Activated CD8-positive, alpha-beta T cell treated with anti-CD3 and anti-CD28 coated beads for 36 hours (primary cell): ENCODE measurements at regions of chr1 and their contacts with region 1.

Region 1: GRCh38 chr1:212699104-212699624 is 476 bp downstream of the BATF3 start:
- DNase-seq: peak; percentile 75
- ATAC-seq: peak; percentile 75
- H3K4me3 Mint-ChIP-seq: peak overlapping the region; percentile 79
- H3K27ac Mint-ChIP-seq: peak overlapping the region; percentile 92
- H3K4me1 Mint-ChIP-seq: peaks cover 57% of the 10 kb centered on the region
- H3K27me3 Mint-ChIP-seq: peaks cover 1% of the 10 kb centered on the region
- CTCF ChIP-seq: peak; percentile 79

Region 2: GRCh38 chr1:212683357-212683722 is 15.8 kb before region 1 on chr1:
- CTCF ChIA-PET with region 1: interaction called, 15 read pairs
- POLR2A ChIA-PET with region 1: interaction called, 10 read pairs
- intact Hi-C with region 1: no loop called
- DNase-seq: peak; percentile 94
- ATAC-seq: peak; percentile 74
- H3K4me3 Mint-ChIP-seq: peak overlapping the region; percentile 67
- H3K27ac Mint-ChIP-seq: peak overlapping the region; percentile 97
- H3K4me1 Mint-ChIP-seq: peaks cover 52% of the 10 kb centered on the region
- H3K27me3 Mint-ChIP-seq: no peaks in the 10 kb centered on the region
- CTCF ChIP-seq: no peak

Region 3: DNA sequence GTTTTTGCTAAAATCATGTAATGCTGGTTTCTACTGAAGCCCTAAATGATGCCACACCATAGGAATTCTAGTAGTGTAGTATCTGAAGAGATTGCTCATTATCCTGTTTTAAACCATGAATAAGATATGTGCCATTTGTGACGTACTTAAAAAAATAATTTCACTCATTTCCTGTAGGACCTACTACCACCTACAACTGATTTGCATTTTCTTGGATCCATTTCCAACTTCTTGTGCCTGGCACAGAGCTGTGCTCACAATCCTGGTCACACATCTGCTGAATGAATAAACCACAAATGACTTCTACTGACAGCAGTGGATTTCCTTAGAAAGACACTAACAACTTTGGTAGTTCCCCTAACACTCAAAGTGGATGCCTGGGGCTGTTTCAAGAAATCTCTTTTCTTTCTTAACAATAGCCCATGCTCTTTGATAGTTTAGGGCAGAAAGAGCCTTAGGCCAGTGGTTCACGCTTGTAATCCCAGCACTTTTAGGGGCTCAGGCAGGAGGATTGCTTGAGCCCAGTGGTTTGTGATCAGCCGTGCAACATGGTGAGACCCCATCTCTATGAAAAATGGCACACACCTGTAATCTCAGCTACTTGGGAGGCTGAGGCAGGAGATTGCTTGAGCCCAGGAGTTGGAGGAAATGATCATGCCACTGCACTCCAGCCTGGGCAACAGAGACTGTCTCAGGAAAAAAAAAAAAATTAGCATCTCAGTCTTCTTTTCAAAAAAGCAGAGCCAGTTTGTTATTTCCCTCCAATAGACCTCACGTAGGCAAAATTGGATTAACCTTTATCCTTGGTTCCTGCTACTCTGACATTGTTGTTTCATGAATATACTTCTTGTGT is 13.5 kb after region 1 on chr1:
- CTCF ChIA-PET with region 1: interaction called, 4 read pairs
- POLR2A ChIA-PET with region 1: interaction called, 11 read pairs
- intact Hi-C with region 1: no loop called
- DNase-seq: peak; percentile 19
- ATAC-seq: peak; percentile 91
- H3K4me3 Mint-ChIP-seq: no peak overlapping the region
- H3K27ac Mint-ChIP-seq: peak overlapping the region; percentile 76
- H3K4me1 Mint-ChIP-seq: peaks cover 21% of the 10 kb centered on the region
- H3K27me3 Mint-ChIP-seq: peaks cover 13% of the 10 kb centered on the region
- CTCF ChIP-seq: no peak

Region 4: GRCh38 chr1:212769459-212770167 is 70.4 kb after region 1 on chr1:
- CTCF ChIA-PET with region 1: interaction called, 15 read pairs
- POLR2A ChIA-PET with region 1: no interaction called
- intact Hi-C with region 1: no loop called
- DNase-seq: no peak
- ATAC-seq: peak; percentile 91
- H3K4me3 Mint-ChIP-seq: peak overlapping the region; percentile 8
- H3K27ac Mint-ChIP-seq: peak overlapping the region; percentile 68
- H3K4me1 Mint-ChIP-seq: peaks cover 68% of the 10 kb centered on the region
- H3K27me3 Mint-ChIP-seq: no peaks in the 10 kb centered on the region
- CTCF ChIP-seq: no peak

Region 5: DNA sequence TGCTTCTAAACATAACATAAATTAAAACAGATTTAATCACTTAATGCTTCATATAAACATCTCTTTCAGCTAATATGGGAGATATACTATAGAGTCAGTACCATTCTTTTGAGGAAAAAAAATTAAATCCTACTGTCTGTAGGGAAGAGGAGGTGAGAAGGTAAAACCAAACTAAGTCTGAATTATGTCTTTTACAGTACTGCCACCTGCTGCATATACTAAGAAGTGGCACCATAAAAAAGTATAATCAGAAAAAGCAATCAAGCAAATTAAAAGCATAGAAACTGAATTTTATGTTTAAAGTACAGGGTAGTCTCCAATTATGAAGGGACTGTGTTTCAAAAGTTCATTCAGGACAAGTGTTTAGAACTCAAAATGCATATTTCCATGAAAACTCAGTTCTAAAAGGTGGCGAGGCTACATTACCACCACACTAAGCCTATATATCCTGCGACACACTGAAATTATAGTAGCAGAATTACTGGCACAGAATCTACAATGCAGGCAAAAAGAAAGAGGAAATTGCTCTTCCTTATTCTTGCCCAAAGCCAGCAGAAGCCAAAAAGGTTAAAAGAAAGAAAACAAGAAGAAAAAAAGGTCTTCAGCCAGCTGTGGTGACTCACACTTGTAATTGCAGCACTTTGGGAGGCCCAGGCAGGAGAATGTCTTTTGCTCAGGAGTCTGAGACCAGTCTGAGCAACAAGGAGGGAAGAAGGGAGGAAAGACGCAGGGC is 83.4 kb after region 1 on chr1:
- CTCF ChIA-PET with region 1: interaction called, 27 read pairs
- POLR2A ChIA-PET with region 1: no interaction called
- intact Hi-C with region 1: loop called (anchors 5 kb)
- DNase-seq: no peak
- ATAC-seq: peak; percentile 68
- H3K4me3 Mint-ChIP-seq: no peak overlapping the region
- H3K27ac Mint-ChIP-seq: no peak overlapping the region
- H3K4me1 Mint-ChIP-seq: peaks cover 23% of the 10 kb centered on the region
- H3K27me3 Mint-ChIP-seq: no peaks in the 10 kb centered on the region
- CTCF ChIP-seq: peak; percentile 86